Dendritic cell treated with granulocyte-macrophage colony-stimulating factor and Interleukin-4, amounts not matched to agents 40 ng/mL and 50 ng/mL, for 4 days (primary cell): ENCODE measurements at regions of chr1 and their contacts with region 1.

Region 1: GRCh38 chr1:35030756-35031446 is 844 bp downstream of the ZMYM6 start:
- H3K4me3 Mint-ChIP-seq: peak overlapping the region; percentile 96
- H3K27ac Mint-ChIP-seq: peak overlapping the region; percentile 95
- H3K4me1 Mint-ChIP-seq: peaks cover 37% of the 10 kb centered on the region
- H3K27me3 Mint-ChIP-seq: peaks cover 1% of the 10 kb centered on the region

Region 2: GRCh38 chr1:35079003-35079930 is 48.4 kb after region 1 on chr1 and contains the start of gene ZMYM1:
- intact Hi-C with region 1: loop called (anchors 2 kb)
- H3K4me3 Mint-ChIP-seq: peak within 1 kb of the TSS; percentile 99
- H3K27ac Mint-ChIP-seq: peak within 1 kb of the TSS; percentile 98
- H3K4me1 Mint-ChIP-seq: peaks cover 31% of the 10 kb centered on the region
- H3K27me3 Mint-ChIP-seq: peaks cover 8% of the 10 kb centered on the region